ENCODE measurements at regions of chr7 and their contacts with region 1.

Region 1: GRCh38 chr7:143380255-143380645 is 895 bp upstream of the ZYX start:
- DNase-seq: peak; percentile 79 to 95 (median 88)
- ATAC-seq: peak; percentile 58
- H3K4me3 ChIP-seq: peak overlapping the region; percentile 87
- H3K4me3 Mint-ChIP-seq: peak overlapping the region; percentile 95
- H3K27ac ChIP-seq: peak overlapping the region; percentile 91 to 97
- H3K27ac Mint-ChIP-seq: peak overlapping the region; percentile 98
- H3K4me1 ChIP-seq: peaks cover 77% of the 10 kb centered on the region
- H3K4me1 Mint-ChIP-seq: peaks cover 42% of the 10 kb centered on the region
- H3K27me3 ChIP-seq: no peaks in the 10 kb centered on the region
- H3K27me3 Mint-ChIP-seq: no peaks in the 10 kb centered on the region
- CTCF ChIP-seq: peak; percentile 79

Region 2: DNA sequence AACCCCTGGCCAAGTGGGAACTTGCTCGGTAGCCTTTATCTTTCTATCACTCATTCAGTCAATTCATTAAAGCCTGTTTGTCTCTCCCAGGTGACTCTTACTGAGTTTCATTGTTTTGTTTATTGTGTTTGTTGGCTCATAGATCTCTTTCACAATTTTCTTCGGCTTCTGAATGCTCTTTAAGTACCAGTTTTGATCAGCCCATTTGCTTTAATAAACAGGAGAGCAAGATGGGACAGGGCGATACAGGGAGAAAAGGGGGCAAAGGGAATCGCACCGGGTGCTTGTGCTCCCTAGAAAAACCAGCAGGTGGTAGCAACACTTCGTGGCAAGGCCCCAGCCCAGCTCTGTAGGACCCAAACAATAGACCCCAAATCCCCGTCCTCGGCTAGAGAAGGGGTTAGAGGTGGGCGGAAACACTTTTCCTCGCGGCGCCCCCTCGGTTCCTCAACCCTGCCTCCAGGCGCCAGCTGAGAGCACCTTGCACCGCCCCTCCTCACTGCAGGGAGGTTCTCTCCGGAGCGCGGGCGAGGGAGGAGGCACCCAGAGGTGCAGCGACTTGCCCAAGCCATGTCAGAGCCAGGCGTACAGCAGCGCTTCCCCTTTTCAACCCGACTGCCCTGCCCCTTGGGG is 526.4 kb before region 1 on chr7:
- CTCF ChIA-PET with region 1: no interaction called
- POLR2A ChIA-PET with region 1: no interaction called
- intact Hi-C with region 1: loop called in 1 of 2 experiments (anchors 10 kb)
- DNase-seq: peak; percentile 44 to 83 (median 60)
- ATAC-seq: peak; percentile 82
- H3K4me3 ChIP-seq: peak overlapping the region; percentile 87
- H3K4me3 Mint-ChIP-seq: peak overlapping the region; percentile 95
- H3K27ac ChIP-seq: peak overlapping the region; percentile 24 to 41
- H3K27ac Mint-ChIP-seq: peak overlapping the region; percentile 85
- H3K4me1 ChIP-seq: peaks cover 30% of the 10 kb centered on the region
- H3K4me1 Mint-ChIP-seq: peaks cover 52% of the 10 kb centered on the region
- H3K27me3 ChIP-seq: no peaks in the 10 kb centered on the region
- H3K27me3 Mint-ChIP-seq: no peaks in the 10 kb centered on the region
- CTCF ChIP-seq: peak; percentile 90

Region 3: DNA sequence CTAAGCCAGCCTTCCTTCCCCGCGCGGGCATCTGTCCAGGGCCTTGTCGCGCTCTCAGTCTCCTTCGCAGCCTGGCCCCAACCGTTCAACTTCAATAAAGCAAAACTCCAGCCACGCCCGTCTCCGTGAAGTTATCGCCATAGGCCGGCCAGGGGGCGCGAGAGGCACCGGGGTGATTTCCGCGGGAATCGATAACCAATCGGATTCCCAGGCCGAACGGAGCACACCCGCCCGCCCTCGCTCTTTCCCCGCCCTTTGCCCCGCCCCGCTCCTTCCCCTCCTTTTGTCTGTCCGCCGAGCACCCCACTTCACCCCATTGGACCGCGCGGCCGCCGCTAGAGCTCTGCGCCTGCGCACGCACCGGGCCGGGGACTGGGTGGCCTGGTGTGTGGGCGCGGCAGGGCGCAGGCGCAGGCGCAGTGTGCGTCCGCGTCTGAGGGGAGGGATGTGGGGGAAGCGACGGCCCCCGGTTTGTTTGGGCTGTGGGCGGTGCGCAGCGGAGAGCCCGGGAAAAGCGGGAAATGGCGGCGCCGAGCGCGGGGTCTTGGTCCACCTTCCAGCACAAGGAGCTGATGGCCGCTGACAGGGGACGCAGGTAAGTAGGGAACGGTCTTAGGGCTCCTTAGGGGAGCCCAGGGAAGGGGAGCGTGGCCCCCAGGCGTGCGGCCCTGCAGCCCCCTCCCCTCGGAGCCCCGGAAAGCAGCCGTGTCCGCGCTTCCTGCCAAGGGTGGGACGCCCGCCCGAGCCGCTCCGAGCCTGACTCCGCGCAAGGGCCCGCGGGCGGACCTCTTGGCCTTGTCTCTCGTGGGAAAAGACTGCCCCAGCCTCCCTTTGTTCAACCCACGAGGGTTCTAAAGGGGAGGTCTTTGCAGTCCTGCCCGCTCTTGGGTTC is 92.1 kb before region 1 on chr7 and contains the start of gene CASP2:
- CTCF ChIA-PET with region 1: interaction called, 5 read pairs
- POLR2A ChIA-PET with region 1: interaction called, 17 read pairs
- intact Hi-C with region 1: loop called in 1 of 2 experiments (anchors 2 kb)
- DNase-seq: peak; percentile 97 to 100 (median 99)
- ATAC-seq: peak; percentile 95
- H3K4me3 ChIP-seq: peak within 1 kb of the TSS; percentile 95
- H3K4me3 Mint-ChIP-seq: peak within 1 kb of the TSS; percentile 96
- H3K27ac ChIP-seq: peak within 1 kb of the TSS; percentile 68 to 76
- H3K27ac Mint-ChIP-seq: peak within 1 kb of the TSS; percentile 88
- H3K4me1 ChIP-seq: peaks cover 43% of the 10 kb centered on the region
- H3K4me1 Mint-ChIP-seq: peaks cover 65% of the 10 kb centered on the region
- H3K27me3 ChIP-seq: no peaks in the 10 kb centered on the region
- H3K27me3 Mint-ChIP-seq: no peaks in the 10 kb centered on the region
- CTCF ChIP-seq: peak; percentile 57
- total RNA-seq, gene CASP2: 19.1 to 21.9 TPM

Region 4: DNA sequence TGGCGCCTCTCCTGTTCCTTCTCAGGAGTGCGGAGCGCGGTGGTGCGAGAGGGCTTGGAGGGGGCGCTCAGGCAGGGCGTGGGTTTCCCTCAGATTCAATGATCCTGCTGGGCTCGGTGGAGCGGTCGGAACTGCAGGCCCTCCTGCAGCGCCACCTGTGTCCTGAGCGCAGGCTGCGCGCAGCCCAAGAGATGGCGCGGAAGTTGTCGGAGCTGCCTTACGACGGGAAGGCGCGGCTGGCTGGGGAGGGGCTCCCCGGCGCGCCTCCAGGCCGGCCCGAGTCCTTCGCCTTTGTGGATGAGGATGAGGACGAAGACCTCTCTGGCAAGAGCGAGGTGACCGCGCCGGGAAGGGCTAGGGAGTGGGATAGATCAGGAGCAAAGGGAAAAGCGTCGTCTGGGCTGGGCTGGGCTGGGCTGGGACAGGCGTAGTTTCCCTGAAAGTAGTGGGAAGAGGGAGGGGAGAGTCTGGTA is 34.8 kb before region 1 on chr7:
- CTCF ChIA-PET with region 1: interaction called, 12 read pairs
- POLR2A ChIA-PET with region 1: interaction called, 7 read pairs
- intact Hi-C with region 1: no loop called
- DNase-seq: peak; percentile 42 to 86 (median 60)
- ATAC-seq: peak; percentile 100
- H3K4me3 ChIP-seq: peak overlapping the region; percentile 17
- H3K4me3 Mint-ChIP-seq: peak overlapping the region; percentile 65
- H3K27ac ChIP-seq: no peak overlapping the region
- H3K27ac Mint-ChIP-seq: no peak overlapping the region
- H3K4me1 ChIP-seq: peaks cover 9% of the 10 kb centered on the region
- H3K4me1 Mint-ChIP-seq: peaks cover 9% of the 10 kb centered on the region
- H3K27me3 ChIP-seq: peaks cover 0 to 4% of the 10 kb centered on the region in 2 experiments
- H3K27me3 Mint-ChIP-seq: peaks cover 15% of the 10 kb centered on the region
- CTCF ChIP-seq: peak; percentile 67

Region 5: DNA sequence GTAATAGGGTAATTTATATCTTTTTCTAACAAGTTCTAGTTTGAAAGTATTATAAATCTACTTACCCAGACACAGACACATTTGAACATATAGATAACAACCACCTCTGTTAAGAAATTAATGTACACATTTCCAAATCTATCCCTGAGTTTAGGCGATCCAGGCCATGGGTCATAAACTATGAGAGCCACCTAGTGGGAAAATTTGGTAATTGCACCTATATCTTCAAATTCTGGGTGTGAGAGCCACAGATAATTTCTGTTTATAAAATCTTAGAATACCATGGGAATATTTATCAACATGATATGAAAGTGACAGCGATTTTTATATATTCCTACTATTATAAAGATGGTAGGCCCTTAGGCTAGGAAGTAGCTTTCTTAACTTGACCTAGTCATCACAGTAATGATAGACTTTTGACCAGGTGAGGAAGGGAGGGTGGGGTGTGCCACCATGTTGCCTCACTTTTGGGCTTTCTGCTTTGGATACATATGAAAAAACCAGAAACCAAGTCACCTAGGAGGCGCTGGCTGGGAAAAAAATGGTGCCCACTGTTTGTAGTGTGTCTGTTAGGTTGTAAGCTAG is 36.4 kb after region 1 on chr7:
- CTCF ChIA-PET with region 1: interaction called, 14 read pairs
- POLR2A ChIA-PET with region 1: interaction called, 3 read pairs
- intact Hi-C with region 1: loop called in 1 of 2 experiments (anchors 1 kb)
- DNase-seq: peak in 4 of 14 experiments; percentile 20 to 75 (median 68)
- ATAC-seq: no peak
- H3K4me3 ChIP-seq: no peak overlapping the region
- H3K4me3 Mint-ChIP-seq: no peak overlapping the region
- H3K27ac ChIP-seq: no peak overlapping the region
- H3K27ac Mint-ChIP-seq: no peak overlapping the region
- H3K4me1 ChIP-seq: no peaks in the 10 kb centered on the region
- H3K4me1 Mint-ChIP-seq: peaks cover 46% of the 10 kb centered on the region
- H3K27me3 ChIP-seq: no peaks in the 10 kb centered on the region
- H3K27me3 Mint-ChIP-seq: no peaks in the 10 kb centered on the region
- CTCF ChIP-seq: peak; percentile 82

Measured in CD4-positive, alpha-beta T cell (primary cell).